ENCODE measurements at regions of chr3 and their contacts with region 1.

Region 1: DNA sequence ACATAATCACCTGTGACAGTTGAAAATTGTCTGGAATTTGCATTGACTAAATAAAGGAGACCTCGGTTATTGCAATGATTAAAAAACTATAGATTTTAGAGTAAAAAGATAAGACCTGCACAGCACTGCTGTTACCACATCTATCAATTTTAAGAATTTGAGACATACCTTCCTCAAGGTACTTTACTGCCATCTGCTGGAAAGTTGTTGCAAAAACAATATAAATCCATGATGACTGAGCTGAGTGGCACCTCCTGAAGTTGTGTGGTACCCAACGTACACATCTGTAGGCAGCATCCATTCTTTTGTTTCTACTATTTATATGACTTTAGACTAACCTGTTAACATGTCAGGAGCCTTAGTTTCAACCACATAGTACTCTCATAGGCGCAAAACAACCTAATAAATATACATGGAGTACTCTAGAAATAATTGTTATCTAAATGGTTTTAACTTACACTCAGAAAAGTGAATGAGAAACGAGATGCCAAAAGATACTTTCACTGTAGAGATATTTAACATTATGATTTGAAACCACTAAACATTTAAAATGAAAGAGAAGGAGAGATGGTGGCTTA is 106.7 kb downstream of the GHSR start:
- DNase-seq: peak; percentile 23
- H3K4me3 Mint-ChIP-seq: no peak overlapping the region
- H3K27ac Mint-ChIP-seq: no peak overlapping the region
- H3K4me1 Mint-ChIP-seq: no peaks in the 10 kb centered on the region
- H3K27me3 Mint-ChIP-seq: no peaks in the 10 kb centered on the region

Region 2: GRCh38 chr3:172039436-172040077 is 302.0 kb before region 1 on chr3 and contains the start of gene FNDC3B:
- CTCF ChIA-PET with region 1: interaction called, 17 read pairs
- DNase-seq: peak; percentile 95
- H3K4me3 Mint-ChIP-seq: peak within 1 kb of the TSS; percentile 96
- H3K27ac Mint-ChIP-seq: peak within 1 kb of the TSS; percentile 88
- H3K4me1 Mint-ChIP-seq: peaks cover 21% of the 10 kb centered on the region
- H3K27me3 Mint-ChIP-seq: peaks cover 26% of the 10 kb centered on the region

Region 3: DNA sequence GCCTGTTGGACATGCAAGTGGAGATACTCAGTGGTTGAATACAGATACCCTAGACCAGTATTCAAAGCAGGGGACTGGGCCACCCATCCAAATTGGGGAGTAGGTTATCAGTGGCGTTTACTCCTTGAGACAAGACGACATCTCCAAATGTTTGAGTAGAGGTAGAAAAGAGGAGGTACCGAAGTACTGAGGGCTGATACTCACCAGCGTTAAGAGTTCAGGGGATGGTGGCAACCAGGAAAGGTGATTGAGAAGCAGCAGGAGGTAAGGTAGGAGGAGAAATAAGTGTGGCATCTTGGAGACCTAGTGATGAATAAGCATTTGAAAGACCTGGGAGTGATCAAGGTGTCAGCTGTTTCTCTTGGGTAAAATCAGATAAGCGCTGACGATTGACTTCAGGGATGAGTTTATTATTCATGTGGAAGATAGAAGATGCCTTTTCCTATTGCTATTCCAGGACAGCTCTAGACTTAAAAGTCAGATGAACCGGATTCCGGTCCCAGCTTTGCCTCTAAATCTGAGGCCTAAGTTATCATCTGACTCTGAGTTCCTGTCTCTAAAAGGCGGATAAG is 10.4 kb after region 1 on chr3:
- CTCF ChIA-PET with region 1: interaction called, 16 read pairs
- DNase-seq: no peak
- H3K4me3 Mint-ChIP-seq: no peak overlapping the region
- H3K27ac Mint-ChIP-seq: no peak overlapping the region
- H3K4me1 Mint-ChIP-seq: peaks cover 5% of the 10 kb centered on the region
- H3K27me3 Mint-ChIP-seq: no peaks in the 10 kb centered on the region

Region 4: GRCh38 chr3:172666873-172667694 is 325.5 kb after region 1 on chr3:
- CTCF ChIA-PET with region 1: interaction called, 56 read pairs
- DNase-seq: peak; percentile 87
- H3K4me3 Mint-ChIP-seq: no peak overlapping the region
- H3K27ac Mint-ChIP-seq: no peak overlapping the region
- H3K4me1 Mint-ChIP-seq: peaks cover 23% of the 10 kb centered on the region
- H3K27me3 Mint-ChIP-seq: peaks cover 11% of the 10 kb centered on the region